ENCODE measurements at regions of chr10 and their contacts with region 1.

Region 1: DNA sequence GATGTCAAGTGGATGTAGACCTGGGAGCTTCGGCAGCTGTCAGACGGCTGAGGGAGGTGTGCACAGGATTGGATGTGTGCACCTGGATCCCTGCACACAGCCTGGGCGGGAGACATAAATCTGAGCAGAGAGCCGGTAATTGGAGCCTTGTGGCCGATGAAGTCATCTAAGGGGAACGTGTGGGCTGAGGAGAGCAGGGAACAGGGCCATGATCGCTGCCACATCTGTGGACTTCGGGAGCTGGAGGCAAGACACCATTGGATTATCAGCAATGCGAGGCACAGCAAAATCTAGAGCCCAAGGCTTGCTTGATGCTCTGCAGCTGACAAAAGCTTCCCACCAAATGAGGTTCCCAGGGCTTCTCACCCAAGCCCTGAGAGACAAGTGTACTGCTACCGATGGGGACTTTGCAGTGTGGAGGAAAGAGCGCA is 147.7 kb downstream of the PTPN20 start:
- DNase-seq: no peak
- ATAC-seq: no peak
- H3K4me3 ChIP-seq: no peak overlapping the region
- H3K27ac ChIP-seq: no peak overlapping the region
- H3K4me1 ChIP-seq: no peaks in the 10 kb centered on the region
- H3K27me3 ChIP-seq: peaks cover 4 to 9% of the 10 kb centered on the region in 2 experiments
- CTCF ChIP-seq: no peak
- EP300 ChIP-seq: no peak
- POLR2A ChIP-seq: no peak
- RAD21 ChIP-seq: no peak

Region 2: DNA sequence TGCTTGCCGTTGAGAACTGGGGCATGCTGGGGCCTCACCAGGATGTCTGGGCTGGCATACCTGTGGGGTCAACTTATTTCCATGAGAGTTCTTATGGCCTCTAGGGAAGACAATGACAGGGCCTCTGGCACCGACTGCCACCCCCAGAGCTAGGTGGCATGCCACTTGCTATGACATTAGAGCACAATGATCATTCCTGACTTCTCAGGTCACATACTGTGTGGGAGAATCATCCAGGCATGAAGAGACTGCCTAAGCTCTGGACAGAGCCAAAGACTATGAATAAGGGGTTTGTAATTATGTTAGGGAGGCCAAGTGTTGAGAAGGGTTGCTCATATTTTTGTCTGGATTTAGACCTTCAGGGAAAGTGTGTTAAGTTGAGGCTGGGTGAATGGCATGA is 50.2 kb before region 1 on chr10:
- CTCF ChIA-PET with region 1: no interaction called
- POLR2A ChIA-PET with region 1: no interaction called
- RAD21 ChIA-PET with region 1: no interaction called
- SMC1A ChIA-PET with region 1: no interaction called
- in situ Hi-C with region 1: no loop called
- intact Hi-C with region 1: loop called (anchors 10 kb)
- DNase-seq: no peak
- ATAC-seq: no peak
- H3K4me3 ChIP-seq: no peak overlapping the region
- H3K27ac ChIP-seq: no peak overlapping the region
- H3K4me1 ChIP-seq: no peaks in the 10 kb centered on the region
- H3K27me3 ChIP-seq: no peaks in the 10 kb centered on the region; a peak in 1 of 4 replicates
- CTCF ChIP-seq: no peak
- EP300 ChIP-seq: no peak
- POLR2A ChIP-seq: no peak
- RAD21 ChIP-seq: no peak

Region 3: GRCh38 chr10:47031211-47031900 is 27.6 kb before region 1 on chr10:
- CTCF ChIA-PET with region 1: no interaction called
- POLR2A ChIA-PET with region 1: no interaction called
- RAD21 ChIA-PET with region 1: no interaction called
- SMC1A ChIA-PET with region 1: no interaction called
- in situ Hi-C with region 1: no loop called
- intact Hi-C with region 1: no loop called
- DNase-seq: no peak
- ATAC-seq: peak; percentile 40; the same call in 1 of the 3 replicates
- H3K4me3 ChIP-seq: no peak overlapping the region
- H3K27ac ChIP-seq: no peak overlapping the region
- H3K4me1 ChIP-seq: no peaks in the 10 kb centered on the region
- H3K27me3 ChIP-seq: no peaks in the 10 kb centered on the region; a peak in 1 of 4 replicates
- CTCF ChIP-seq: peak in 2 of 3 experiments; percentile 11 to 22; a peak in 1 of 6 replicates
- EP300 ChIP-seq: no peak
- POLR2A ChIP-seq: no peak
- RAD21 ChIP-seq: no peak